HepG2 (cell line): ENCODE measurements at regions of chr2 and their contacts with region 1.

Region 1: DNA sequence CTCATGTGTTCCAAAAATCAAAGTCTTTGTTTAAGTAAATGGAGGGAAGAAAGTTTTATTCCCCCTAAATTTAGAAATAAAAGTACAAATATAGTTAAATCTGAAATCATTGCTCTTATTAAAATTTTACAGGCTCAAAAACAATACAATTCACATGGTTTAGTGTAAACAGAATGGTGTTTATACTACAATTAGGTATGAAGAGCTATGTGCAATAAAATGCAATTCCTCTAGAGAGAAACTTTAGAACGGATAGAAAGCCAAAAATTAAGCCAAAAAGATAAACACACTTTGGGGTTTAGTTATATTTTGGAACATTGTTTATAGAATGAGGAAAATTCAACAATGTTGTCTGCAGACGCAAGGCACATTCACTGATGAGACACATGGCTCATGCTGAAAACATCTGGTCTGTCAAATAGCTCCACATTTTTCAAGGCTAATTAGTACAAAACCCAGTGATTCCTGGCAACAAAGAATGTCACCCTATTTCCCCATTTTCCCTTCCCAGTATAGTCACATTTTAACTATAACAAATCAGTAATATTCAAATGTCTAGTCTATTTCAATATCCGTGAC is 103.3 kb downstream of the EXOC6B start:
- DNase-seq: peak; percentile 53
- ATAC-seq: peak; percentile 44; the same call in 2 of the 3 replicates
- H3K4me3 ChIP-seq: no peak overlapping the region
- H3K27ac ChIP-seq: no peak overlapping the region
- H3K4me1 ChIP-seq: peaks cover 57% of the 10 kb centered on the region
- H3K27me3 ChIP-seq: no peaks in the 10 kb centered on the region
- CTCF ChIP-seq: no peak
- EP300 ChIP-seq: no peak
- POLR2A ChIP-seq: no peak
- RAD21 ChIP-seq: no peak

Region 2: DNA sequence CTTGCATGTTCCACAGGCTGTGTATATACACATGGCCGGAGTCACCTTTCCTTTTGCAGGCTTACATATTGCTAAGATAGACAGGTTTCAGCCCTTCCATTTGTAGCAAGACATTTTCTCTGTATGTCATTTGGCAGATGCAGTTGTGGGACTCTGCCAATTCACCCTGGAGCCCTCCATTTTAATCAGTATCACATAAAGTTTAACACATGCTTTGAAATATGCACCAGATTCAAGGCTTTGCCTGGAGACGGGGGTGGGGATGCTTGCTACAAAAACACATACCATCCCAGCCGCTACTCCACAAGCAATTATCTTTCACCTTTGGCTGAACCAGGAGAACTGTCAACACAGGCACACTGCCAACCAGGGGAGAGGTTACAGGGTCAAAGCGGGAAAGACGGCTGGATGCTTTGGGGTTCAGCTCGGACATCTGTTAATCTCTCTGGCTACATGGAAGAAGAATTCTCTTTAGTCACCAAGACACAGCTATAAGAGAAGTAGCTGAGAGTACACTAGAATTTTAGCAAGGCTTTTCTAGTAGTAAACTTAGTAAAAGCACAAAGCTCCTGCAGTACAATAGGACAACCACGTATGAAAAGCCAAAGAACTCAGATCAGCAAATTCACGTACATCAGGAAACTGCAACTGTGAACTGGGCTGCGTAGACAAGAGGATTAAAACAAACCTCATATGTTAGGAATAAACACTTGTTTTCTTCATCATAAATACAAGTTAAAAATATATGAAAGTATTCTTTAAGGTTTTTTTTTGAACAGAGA is 27.7 kb before region 1 on chr2:
- CTCF ChIA-PET with region 1: no interaction called
- POLR2A ChIA-PET with region 1: interaction called, 3 read pairs
- in situ Hi-C with region 1: no loop called
- intact Hi-C with region 1: loop called (anchors 1 kb)
- DNase-seq: peak; percentile 94
- ATAC-seq: peak; percentile 97
- H3K4me3 ChIP-seq: no peak overlapping the region
- H3K27ac ChIP-seq: no peak overlapping the region
- H3K4me1 ChIP-seq: peaks cover 21% of the 10 kb centered on the region
- H3K27me3 ChIP-seq: no peaks in the 10 kb centered on the region
- CTCF ChIP-seq: no peak
- EP300 ChIP-seq: peak in 1 of 2 experiments; percentile 88; a peak in 2 of 4 replicates
- POLR2A ChIP-seq: no peak
- RAD21 ChIP-seq: no peak

Region 3: DNA sequence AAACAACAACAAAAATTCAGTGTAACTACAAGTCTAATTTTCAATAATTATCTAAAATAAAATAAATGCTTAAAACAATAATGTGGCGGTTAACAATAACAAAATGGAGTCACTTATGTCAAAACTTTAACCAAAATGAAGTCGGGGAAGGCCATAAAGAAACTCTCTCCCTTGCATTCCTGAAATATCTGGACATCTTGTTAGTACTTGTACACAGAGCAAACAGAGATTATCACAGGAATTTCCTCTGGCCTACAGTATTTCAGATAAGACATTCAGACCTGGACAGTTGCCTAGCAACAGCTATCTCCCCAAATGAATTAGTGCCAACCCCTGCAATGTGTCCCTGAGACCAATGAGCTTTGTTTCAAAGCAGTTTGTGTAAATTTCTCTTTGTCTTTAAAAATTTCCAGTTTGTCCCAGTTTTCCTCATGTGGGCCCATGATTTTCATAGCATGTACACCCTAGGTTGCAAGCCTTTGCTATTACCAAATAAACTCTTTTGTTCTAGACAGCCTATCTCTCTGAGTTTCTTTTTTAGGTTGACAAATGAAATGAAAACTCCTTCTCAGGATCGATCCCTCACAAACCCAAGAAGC is 34.7 kb after region 1 on chr2:
- CTCF ChIA-PET with region 1: no interaction called
- POLR2A ChIA-PET with region 1: interaction called, 5 read pairs
- in situ Hi-C with region 1: no loop called
- intact Hi-C with region 1: loop called (anchors 5 kb)
- DNase-seq: peak; percentile 100
- ATAC-seq: peak; percentile 98
- H3K4me3 ChIP-seq: peak overlapping the region in 2 of 3 experiments; percentile 27 to 55; a peak in 4 of 6 replicates
- H3K27ac ChIP-seq: peak overlapping the region; percentile 93
- H3K4me1 ChIP-seq: peaks cover 74% of the 10 kb centered on the region
- H3K27me3 ChIP-seq: no peaks in the 10 kb centered on the region
- CTCF ChIP-seq: no peak
- EP300 ChIP-seq: peak in 1 of 2 experiments; percentile 96; a peak in 3 of 4 replicates
- POLR2A ChIP-seq: no peak
- RAD21 ChIP-seq: peak; percentile 72